ENCODE measurements at regions of chr13 and their contacts with region 1.

Region 1: DNA sequence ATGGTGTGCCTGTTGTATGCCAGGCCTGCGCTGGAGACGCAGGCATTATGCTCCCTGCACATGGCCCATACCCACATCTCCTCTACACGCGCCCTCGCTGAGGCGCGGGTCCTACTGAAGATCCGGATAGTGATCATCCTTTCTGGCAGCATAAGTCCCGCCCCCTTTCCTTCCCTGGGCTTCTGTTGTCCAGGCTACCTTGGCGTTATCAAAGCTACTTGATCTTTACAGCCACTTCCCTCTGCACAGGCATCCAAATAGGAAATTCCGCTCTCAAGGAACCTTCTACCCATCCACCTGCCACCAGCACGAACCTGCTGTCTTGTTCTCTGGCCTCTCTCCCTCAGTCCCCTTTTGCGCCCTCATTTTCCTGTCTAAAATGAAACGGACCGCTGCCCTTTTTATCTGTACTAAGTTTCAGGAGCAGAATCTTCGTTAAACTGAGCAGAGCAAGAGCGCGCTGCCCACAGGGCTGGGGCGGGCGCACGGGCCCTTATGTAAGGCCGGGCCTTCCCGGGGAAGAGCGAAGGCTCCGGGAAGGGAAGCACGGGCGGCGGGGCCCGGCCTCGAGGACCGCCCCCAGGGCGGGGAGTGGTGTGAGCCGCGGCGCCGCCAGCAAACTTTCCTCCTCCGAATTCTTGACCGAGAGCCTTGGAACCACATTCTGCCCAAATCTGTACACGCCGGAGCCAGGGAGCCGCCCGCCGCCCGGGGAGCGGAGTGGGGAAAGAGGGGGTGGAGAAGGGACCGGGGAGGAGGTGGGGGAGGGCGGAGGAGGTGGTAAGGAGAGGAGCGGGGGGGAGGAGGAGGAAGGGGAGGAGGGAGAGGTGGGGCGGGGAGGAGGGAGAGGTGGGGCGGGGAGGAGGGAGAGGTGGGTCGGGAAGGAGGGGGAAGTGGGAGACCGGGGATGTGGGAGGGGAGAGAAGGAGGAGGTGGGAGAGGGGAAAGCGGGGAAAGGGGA is 920 bp upstream of the UBE2L5 start:
- DNase-seq: peak; percentile 59
- ATAC-seq: peak; percentile 48
- H3K4me3 Mint-ChIP-seq: peak overlapping the region; percentile 67
- H3K27ac Mint-ChIP-seq: peak overlapping the region; percentile 30
- H3K4me1 Mint-ChIP-seq: peaks cover 14% of the 10 kb centered on the region
- H3K27me3 Mint-ChIP-seq: peaks cover 6% of the 10 kb centered on the region

Region 2: DNA sequence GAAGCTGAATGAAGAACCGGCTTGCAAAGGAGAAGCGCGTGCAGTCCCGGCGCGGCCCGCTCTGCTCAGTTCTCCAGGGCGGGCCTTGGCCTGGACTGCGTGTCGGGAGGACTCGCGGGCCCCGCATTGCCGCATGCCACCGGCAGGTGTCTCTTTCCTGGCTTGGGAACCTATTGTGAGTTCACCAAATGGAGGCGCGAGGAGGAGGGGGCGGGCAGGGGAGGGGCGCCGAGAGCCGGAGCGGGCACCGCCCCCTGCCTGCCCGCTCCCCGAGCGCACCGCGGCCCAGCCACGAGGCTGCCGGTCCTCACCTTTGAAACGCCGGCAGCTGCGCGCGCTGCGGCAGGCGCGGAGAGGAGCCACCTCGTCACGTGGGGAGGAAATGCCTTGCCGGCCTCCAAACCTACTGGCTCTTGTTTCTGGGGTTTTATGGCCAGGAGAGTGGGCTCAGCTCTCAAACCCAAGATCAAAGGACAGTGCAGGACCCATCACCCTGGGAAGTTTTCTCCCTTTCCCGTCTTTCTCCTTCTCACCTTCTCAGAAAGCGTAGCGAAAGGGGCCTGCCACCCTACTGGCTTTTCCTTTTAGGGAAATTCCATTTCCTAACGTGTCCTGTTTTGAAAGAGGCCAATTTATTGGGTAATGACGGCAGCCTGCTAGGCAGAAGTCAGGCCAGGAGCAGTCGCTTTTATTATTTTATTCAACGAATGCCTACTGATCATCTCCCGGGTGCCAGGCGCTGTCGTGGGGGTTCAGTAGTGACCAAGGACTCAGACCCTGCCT is 12.9 kb before region 1 on chr13:
- CTCF ChIA-PET with region 1: interaction called, 23 read pairs
- DNase-seq: peak; percentile 95
- ATAC-seq: peak; percentile 98
- H3K4me3 Mint-ChIP-seq: peak overlapping the region; percentile 55
- H3K27ac Mint-ChIP-seq: peak overlapping the region; percentile 61
- H3K4me1 Mint-ChIP-seq: peaks cover 21% of the 10 kb centered on the region
- H3K27me3 Mint-ChIP-seq: peaks cover 4% of the 10 kb centered on the region

Region 3: GRCh38 chr13:30545320-30545719 is 123.9 kb after region 1 on chr13:
- CTCF ChIA-PET with region 1: no interaction called
- DNase-seq: no peak
- ATAC-seq: no peak
- H3K4me3 Mint-ChIP-seq: no peak overlapping the region
- H3K27ac Mint-ChIP-seq: no peak overlapping the region
- H3K4me1 Mint-ChIP-seq: peaks cover 1% of the 10 kb centered on the region
- H3K27me3 Mint-ChIP-seq: no peaks in the 10 kb centered on the region